PC-3 (cell line): ENCODE measurements at regions of chr9 and their contacts with region 1.

Region 1: DNA sequence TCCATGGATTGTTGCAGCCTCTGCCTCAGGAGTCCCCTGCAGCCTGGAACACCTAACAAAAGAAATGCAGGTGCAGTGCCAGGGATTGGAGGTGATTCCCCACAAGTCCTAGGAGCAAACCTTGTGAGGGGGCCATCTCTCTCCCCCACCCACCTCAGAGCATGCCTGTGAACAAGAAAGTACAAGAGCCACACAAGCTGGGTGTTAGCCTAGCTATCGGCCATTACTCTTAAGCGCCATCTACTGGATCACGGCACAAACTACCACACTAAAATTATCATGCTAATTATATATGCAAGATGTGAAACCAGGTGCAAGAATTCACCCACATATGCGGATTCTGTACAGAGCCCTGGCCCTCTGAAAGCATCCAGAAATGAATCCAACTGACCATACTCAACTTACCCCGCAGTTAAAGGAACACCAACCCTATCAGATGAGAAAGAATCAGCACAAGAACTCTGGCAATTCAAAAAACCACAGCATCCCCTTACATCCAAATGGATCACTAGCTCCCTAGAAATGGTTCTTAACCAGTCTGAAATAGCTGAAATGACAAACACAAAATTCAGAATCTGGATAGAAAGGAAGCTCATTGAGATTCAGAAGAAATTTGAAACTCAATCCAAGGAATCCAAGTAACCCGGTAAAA is 16.5 kb upstream of the PRSS3 start:
- DNase-seq: peak; percentile 84
- ATAC-seq: peak; percentile 43
- H3K4me3 ChIP-seq: peak overlapping the region; percentile 49
- H3K27ac ChIP-seq: peak overlapping the region; percentile 87
- H3K4me1 ChIP-seq: peaks cover 63% of the 10 kb centered on the region
- H3K27me3 ChIP-seq: no peaks in the 10 kb centered on the region
- CTCF ChIP-seq: peak; percentile 75

Region 2: DNA sequence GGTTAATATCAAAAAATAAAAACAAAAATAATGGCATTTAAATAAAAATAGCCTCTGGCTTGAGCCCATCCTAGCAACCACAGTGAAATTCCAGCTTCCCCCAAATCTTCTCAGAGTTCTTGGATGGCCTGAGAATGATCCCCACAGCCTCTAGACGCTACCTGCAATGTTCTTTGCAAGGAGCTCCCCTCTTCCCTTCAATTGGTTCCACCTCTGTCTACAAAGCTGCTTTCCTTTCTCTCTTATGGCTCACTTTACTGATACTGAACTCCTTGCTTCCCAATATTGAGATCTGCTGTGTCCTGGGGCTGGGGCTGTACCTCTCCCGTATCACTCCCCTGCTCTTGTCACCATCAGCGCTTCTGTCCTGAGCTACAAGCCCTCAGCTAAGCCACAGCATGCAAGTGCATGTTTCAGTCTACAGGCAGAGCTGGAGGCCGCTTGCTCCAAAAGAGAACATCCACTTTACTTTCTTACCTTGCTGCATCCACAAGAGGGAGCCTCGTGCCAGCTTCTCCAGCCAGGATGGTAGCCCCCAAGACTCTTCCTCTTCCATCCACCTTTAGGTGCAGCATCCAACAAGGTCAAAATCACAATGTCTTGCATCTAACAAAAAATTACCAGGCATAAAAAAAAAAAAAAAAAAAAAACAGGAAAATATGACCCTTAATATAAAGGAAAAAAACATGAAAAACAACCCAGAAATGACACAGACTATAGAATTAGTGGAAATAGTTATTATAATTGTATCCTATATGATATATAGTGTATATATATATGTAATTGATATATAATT is 40.8 kb before region 1 on chr9:
- CTCF ChIA-PET with region 1: interaction called, 34 read pairs
- POLR2A ChIA-PET with region 1: interaction called, 3 read pairs
- intact Hi-C with region 1: loop called (anchors 1 kb)
- DNase-seq: peak; percentile 63
- ATAC-seq: peak; percentile 78
- H3K4me3 ChIP-seq: no peak overlapping the region
- H3K27ac ChIP-seq: peak overlapping the region; percentile 50
- H3K4me1 ChIP-seq: peaks cover 29% of the 10 kb centered on the region
- H3K27me3 ChIP-seq: no peaks in the 10 kb centered on the region
- CTCF ChIP-seq: peak; percentile 71

Region 3: GRCh38 chr9:33762343-33762742 is 16.5 kb before region 1 on chr9:
- CTCF ChIA-PET with region 1: interaction called, 3 read pairs
- POLR2A ChIA-PET with region 1: interaction called, 8 read pairs
- intact Hi-C with region 1: loop called (anchors 2 kb)
- DNase-seq: peak; percentile 79
- ATAC-seq: peak; percentile 39
- H3K4me3 ChIP-seq: peak overlapping the region; percentile 11; the same call in 1 of the 2 replicates
- H3K27ac ChIP-seq: peak overlapping the region; percentile 99
- H3K4me1 ChIP-seq: peaks cover 87% of the 10 kb centered on the region
- H3K27me3 ChIP-seq: no peaks in the 10 kb centered on the region
- CTCF ChIP-seq: no peak

Region 4: DNA sequence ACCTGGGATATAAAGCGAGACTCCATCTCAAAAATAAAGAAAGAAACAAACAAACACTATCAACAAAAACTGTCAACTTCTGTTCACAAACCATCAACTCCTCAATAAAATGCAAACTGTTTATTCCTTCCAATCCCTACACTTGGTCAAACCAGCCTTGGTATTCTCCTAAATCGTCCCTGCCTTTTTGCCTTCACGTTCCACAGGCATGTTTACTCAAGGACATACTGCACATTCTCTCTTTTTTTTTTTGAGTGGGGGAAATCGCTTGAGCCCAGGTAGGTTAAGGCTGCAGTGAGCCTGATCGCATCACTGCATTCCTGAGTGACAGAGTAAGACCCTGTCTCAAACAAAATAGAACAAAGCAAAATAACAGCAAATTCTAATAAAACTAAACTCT is 256.8 kb after region 1 on chr9:
- CTCF ChIA-PET with region 1: no interaction called
- POLR2A ChIA-PET with region 1: no interaction called
- intact Hi-C with region 1: no loop called
- DNase-seq: peak; percentile 3
- ATAC-seq: no peak
- H3K4me3 ChIP-seq: no peak overlapping the region
- H3K27ac ChIP-seq: no peak overlapping the region
- H3K4me1 ChIP-seq: no peaks in the 10 kb centered on the region
- H3K27me3 ChIP-seq: no peaks in the 10 kb centered on the region
- CTCF ChIP-seq: no peak